ENCODE measurements at regions of chr6 and their contacts with region 1.

Region 1: DNA sequence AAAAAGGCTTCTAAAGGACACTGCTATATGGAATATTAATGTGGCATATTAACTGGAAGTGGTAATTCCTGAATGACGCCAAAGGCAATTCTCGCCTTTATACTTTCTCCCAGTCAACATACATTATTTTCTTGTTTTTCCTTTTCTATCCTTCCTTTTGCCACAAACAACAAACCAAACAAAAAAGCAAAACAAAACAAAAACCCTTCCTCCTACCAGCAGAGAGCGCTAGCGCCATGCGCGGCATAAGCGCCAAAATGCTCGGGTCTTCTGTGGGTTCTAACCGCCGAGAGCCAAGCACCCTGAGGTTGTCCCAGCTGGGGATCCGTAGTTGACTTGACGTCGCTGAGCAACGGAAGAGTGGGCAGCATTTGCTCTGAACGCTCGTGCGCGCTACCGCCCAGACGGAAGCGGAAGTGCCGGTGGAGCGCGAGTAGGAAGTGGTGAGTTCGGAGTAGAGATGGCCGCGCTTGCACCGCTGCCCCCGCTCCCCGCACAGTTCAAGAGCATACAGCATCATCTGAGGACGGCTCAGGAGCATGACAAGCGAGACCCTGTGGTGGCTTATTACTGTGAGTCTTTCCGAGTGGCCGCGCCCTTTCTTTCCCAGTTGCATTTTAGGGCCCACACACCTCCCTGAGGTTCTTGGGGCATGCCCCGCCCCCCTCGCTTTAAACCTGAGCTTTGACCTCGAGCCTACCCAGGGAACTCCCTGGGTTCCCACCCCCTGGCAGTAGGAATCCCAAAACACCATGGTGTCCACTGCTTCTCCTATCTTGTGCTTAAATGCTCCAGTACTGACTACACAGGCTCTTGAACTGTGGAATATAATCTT is at the starts of genes NMBR and VTA1:
- DNase-seq: peak; percentile 98
- H3K4me3 Mint-ChIP-seq: peak within 1 kb of the TSS; percentile 96
- H3K27ac Mint-ChIP-seq: peak within 1 kb of the TSS; percentile 70
- H3K4me1 Mint-ChIP-seq: peaks cover 51% of the 10 kb centered on the region
- H3K27me3 Mint-ChIP-seq: no peaks in the 10 kb centered on the region
- total RNA-seq, gene NMBR: not detected
- total RNA-seq, gene VTA1: 43.5 to 47.4 TPM

Region 2: DNA sequence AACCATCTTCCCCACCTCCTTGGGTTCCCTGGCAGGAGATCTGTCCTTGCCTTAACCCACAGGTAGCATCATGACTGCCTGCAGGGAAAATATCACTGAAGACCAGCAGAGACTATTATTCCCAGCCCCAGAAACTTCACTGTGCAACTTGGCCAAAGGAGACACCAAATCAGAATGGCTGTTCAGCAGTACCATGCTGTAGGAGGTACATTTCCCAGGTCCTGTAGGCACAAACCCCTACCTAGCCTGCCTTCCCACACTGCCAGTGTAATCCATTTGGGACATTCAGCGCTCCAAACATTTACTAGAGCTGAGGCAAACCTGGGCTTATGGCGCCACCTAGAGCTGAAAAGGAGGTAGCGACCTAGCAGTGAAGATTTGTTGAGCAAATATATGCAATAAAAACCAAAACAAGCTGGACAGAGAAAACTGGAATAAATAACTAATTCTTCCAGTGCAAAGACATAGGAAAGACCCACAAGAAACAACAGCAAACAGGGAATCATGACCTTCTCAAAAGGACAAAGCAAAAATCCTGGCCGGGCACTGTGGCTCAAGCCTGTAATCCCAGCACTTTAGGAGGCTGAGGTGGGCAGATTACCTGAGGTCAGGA is 60.3 kb after region 1 on chr6:
- CTCF ChIA-PET with region 1: interaction called, 30 read pairs
- POLR2A ChIA-PET with region 1: interaction called, 3 read pairs
- intact Hi-C with region 1: loop called (anchors 1 kb)
- DNase-seq: peak; percentile 49
- H3K4me3 Mint-ChIP-seq: no peak overlapping the region
- H3K27ac Mint-ChIP-seq: no peak overlapping the region
- H3K4me1 Mint-ChIP-seq: no peaks in the 10 kb centered on the region
- H3K27me3 Mint-ChIP-seq: no peaks in the 10 kb centered on the region

Region 3: GRCh38 chr6:142387997-142388815 is 241.2 kb after region 1 on chr6:
- CTCF ChIA-PET with region 1: interaction called, 10 read pairs
- POLR2A ChIA-PET with region 1: interaction called, 3 read pairs
- intact Hi-C with region 1: loop called (anchors 1 kb)
- DNase-seq: no peak
- H3K4me3 Mint-ChIP-seq: no peak overlapping the region
- H3K27ac Mint-ChIP-seq: no peak overlapping the region
- H3K4me1 Mint-ChIP-seq: no peaks in the 10 kb centered on the region
- H3K27me3 Mint-ChIP-seq: peaks cover 3% of the 10 kb centered on the region

Region 4: DNA sequence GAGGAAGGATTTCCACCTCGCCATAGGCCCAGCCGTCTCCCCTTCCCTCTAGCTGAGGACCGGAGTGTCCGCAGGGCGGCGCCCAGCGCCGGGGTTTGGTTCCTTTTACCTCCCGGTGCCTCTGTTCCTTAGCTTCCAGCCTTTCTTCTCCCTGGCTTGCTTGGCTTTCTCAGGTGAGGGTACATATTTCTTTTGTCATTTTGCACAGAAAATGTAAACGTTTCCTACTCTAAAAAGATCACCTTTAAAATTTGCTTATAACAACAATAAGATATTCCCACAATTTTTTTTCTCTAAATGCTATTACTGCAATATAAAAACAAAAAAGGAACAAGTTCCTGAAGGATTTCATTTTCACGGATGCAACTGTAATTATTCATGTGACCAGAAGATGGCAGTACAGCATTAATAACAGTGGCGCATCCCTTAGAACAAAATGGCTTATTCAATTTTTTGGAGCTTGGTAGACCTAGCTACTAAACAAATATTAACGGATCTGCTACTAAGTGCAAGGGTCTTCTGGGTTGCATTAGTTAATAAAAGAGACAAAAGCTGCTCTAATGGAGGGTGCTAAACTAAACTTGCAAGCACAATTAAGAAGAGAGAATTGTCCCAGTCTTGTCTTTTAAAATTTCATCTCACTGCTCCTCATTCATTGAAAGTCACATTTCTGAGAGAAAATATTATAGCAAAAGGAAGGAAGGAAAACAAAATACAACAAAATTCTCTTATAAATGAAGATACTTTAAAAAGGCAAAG is 327.7 kb after region 1 on chr6:
- CTCF ChIA-PET with region 1: interaction called, 3 read pairs
- POLR2A ChIA-PET with region 1: no interaction called
- intact Hi-C with region 1: loop called (anchors 5 kb)
- DNase-seq: no peak
- H3K4me3 Mint-ChIP-seq: no peak overlapping the region
- H3K27ac Mint-ChIP-seq: no peak overlapping the region
- H3K4me1 Mint-ChIP-seq: no peaks in the 10 kb centered on the region
- H3K27me3 Mint-ChIP-seq: peaks cover 2% of the 10 kb centered on the region

Region 5: DNA sequence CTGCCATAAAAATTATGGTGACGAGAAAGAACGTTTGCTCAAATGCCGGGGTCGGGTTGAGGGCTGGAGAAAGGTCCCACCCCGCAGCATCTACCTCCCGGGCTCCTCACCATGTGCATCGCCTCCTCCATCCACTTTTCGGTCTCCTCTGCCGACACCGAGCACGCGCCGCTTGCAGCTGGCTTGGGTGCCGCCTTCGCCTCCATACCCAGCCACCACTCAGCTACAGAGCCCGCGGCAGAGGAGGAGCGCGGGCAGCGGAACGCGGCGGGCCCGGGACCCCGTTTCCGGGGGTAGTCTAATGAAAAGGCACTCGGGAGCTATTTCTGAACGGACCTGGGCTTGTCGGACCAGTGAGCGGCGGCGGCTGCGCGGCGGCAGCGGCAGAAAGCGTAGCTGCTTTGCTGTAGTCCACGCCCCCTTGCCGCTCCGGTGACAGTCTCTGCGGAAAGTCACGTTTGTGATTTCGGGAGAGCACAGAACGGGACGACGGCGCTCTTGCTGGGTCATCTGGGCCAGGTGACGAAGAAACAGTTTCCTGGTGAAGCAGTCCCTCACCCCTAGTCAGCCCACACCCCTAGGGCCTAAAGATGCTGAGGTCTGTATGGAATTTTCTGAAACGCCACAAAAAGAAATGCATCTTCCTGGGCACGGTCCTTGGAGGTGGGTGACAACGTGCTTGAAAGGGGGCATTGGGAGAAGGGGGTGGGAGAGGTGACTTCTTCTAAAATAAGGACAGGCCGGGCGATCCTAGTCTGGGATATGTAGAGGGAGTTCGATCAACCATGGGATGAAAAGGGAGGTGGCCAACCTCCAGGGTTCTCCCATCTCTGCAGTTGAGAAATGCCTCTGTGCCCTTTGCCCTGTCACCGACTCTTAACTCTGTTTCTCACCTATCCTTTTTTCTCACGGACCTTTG is 1303.7 kb after region 1 on chr6 and contains the starts of genes ADAT2 and PEX3:
- CTCF ChIA-PET with region 1: no interaction called
- POLR2A ChIA-PET with region 1: no interaction called
- intact Hi-C with region 1: loop called (anchors 5 kb)
- DNase-seq: peak; percentile 97
- H3K4me3 Mint-ChIP-seq: peak within 1 kb of the TSS; percentile 88
- H3K27ac Mint-ChIP-seq: peak within 1 kb of the TSS; percentile 91
- H3K4me1 Mint-ChIP-seq: peaks cover 45% of the 10 kb centered on the region
- H3K27me3 Mint-ChIP-seq: no peaks in the 10 kb centered on the region
- total RNA-seq, gene ADAT2: 26.0 to 27.0 TPM
- total RNA-seq, gene PEX3: 19.7 to 21.1 TPM